ENCODE measurements at regions of chr14 and their contacts with region 1.

Region 1: GRCh38 chr14:73741386-73741875 is 27.2 kb upstream of the PNMA1 start:
- DNase-seq: peak; percentile 97
- H3K4me3 ChIP-seq: peak overlapping the region in 1 of 3 experiments; percentile 31
- H3K27ac ChIP-seq: peak overlapping the region; percentile 96
- H3K4me1 ChIP-seq: peaks cover 66% of the 10 kb centered on the region
- H3K27me3 ChIP-seq: no peaks in the 10 kb centered on the region
- CTCF ChIP-seq: no peak
- POLR2A ChIP-seq: no peak

Region 2: DNA sequence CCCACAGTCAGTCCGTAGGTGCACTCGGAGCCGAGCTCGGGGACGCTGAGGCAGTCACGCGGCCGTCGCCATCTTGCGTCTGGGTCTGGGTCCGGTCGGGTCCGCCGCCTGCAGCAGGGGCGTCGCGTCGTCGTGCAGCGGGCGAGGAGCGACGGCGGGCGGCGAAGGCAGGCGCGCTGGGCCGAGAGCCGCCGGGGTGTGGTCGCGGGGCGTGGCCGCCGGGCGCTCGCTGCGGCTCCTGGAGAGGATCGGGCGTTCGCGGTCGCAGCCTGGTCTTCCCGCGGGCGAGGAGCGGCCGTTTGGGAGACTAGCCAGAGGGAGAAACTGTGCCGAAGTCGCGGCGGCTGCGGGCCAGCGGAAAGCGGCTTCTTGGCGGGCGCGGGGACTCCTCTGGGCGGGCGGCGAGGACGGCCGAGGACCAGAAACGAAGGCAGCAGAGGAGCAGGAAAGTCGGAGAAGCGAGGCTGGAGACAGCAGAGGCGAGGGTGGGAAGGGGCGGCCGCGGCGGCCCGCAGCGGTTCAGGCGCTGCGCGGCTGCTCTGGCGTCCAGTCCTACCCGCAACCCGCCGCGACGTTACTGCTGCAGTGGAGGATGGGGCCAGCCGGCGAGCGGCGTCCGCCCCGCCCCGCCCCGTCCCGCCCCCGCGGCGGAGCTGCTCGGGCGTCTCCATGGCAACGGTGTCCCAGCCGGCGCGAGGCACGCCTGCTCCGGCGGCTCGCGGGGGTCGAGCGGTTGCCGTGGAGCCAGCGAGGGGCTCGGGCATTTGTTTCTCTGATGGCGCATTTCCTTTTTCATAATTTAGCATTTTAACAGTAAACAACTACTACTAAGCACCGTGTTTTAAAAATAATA is 27.4 kb before region 1 on chr14 and contains the start of gene PNMA1:
- CTCF ChIA-PET with region 1: no interaction called
- POLR2A ChIA-PET with region 1: no interaction called
- dilution Hi-C with region 1: no loop called
- intact Hi-C with region 1: loop called (anchors 2 kb)
- DNase-seq: peak; percentile 89
- H3K4me3 ChIP-seq: peak within 1 kb of the TSS; percentile 15 to 81 (median 74)
- H3K27ac ChIP-seq: peak within 1 kb of the TSS; percentile 73
- H3K4me1 ChIP-seq: peaks cover 15% of the 10 kb centered on the region
- H3K27me3 ChIP-seq: no peaks in the 10 kb centered on the region
- CTCF ChIP-seq: no peak
- POLR2A ChIP-seq: peak; percentile 91
- total RNA-seq, gene PNMA1: 82.4 and 82.6 TPM in 2 replicates

Region 3: GRCh38 chr14:73753959-73754882 is 12.8 kb after region 1 on chr14:
- CTCF ChIA-PET with region 1: interaction called, 91 read pairs
- POLR2A ChIA-PET with region 1: interaction called, 31 read pairs
- dilution Hi-C with region 1: no loop called
- intact Hi-C with region 1: loop called (anchors 1 kb)
- DNase-seq: peak; percentile 57
- H3K4me3 ChIP-seq: peak overlapping the region in 1 of 3 experiments; percentile 39
- H3K27ac ChIP-seq: peak overlapping the region; percentile 96
- H3K4me1 ChIP-seq: peaks cover 81% of the 10 kb centered on the region
- H3K27me3 ChIP-seq: no peaks in the 10 kb centered on the region
- CTCF ChIP-seq: no peak
- POLR2A ChIP-seq: no peak

Region 4: DNA sequence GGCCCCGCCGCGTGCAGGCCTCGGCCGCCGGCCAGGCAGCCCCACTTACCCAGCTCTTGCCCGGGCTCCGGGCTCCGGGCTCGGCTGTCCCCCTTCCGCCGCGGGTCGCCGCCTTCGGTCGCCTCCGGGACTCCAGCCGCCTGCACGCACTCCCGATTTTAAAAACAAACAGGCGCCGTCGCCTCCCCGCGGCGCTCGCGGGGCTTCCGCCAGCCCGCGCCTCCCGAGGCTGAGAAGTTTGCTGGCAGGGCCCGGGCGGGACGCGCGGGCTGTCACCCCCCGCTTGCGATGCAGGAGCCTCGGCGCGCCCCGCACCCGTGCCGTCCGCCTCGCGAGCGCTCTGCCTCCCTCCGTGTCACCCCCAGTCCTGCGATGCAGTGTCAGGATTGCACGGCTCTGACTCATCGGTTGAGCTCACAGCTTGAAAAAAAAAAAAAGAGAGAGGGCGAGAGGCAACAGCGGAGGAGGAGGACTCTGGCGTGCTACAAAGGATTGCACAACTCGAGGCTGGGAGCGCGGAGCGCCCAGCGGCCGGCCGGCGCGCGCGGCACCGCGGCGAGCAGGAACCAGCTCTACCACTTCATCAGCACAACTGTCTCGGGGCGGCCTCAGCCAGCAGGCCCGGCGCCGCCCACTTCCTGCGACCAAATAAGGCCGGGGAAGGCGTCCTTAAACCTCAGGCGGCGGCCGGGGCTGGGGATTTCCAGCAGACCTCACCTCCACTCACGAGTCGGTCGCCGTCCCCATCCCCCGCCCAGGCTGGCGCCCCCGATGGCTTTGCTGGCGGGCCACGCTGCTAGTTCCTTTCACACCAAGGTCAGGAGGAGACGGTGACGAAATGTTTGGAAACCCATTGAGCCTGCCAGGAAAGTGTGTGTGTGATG is 18.5 kb after region 1 on chr14:
- CTCF ChIA-PET with region 1: interaction called, 91 read pairs
- POLR2A ChIA-PET with region 1: interaction called, 31 read pairs
- dilution Hi-C with region 1: no loop called
- intact Hi-C with region 1: loop called (anchors 1 kb)
- DNase-seq: peak; percentile 97
- H3K4me3 ChIP-seq: peak overlapping the region; percentile 53 to 60 (median 54)
- H3K27ac ChIP-seq: peak overlapping the region; percentile 96
- H3K4me1 ChIP-seq: peaks cover 53% of the 10 kb centered on the region
- H3K27me3 ChIP-seq: no peaks in the 10 kb centered on the region
- CTCF ChIP-seq: peak in 1 of 2 donors; percentile 11
- POLR2A ChIP-seq: peak; percentile 98

Region 5: DNA sequence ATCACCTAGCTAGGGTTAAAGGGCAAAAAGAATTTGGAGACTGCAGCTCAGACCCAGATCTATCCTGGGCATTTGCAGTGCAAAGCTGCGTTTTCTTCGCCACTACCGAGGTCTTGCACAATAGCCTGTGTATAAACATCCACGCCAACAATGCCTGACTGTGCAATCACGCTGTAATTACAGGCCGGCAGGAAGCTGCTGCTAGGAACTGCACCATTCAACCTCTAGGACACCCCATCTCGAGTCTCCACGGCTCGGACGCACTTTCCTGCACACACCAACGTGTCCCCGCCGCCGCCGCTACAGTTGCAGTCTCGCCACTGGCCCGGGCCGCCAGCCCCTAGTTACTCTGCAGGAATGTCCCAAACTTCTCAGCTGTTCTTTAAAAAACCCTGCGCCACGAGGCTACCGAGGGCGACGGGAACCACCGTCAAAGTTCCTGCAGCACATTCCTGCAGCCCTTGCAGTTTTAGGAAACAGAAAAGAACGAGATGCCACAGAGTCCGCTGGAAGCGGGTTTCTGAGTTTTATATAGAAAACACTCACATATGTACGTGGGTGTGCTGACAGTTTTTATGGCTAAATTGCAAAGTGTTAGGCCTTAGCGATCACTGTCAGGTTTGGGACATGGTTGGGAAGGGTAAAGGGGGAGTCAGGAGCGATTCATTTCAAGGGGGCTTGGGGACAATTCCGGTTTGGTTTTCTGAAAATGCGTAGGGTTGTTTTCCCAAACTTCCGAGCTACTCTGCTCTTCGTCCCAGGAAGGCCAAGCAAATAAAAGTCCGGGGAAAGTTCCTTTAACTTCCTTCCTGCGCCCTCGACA is 44.7 kb after region 1 on chr14:
- CTCF ChIA-PET with region 1: interaction called, 5 read pairs
- POLR2A ChIA-PET with region 1: no interaction called
- dilution Hi-C with region 1: no loop called
- intact Hi-C with region 1: loop called (anchors 1 kb)
- DNase-seq: peak; percentile 84
- H3K4me3 ChIP-seq: peak overlapping the region; percentile 33 to 79 (median 47)
- H3K27ac ChIP-seq: peak overlapping the region; percentile 93
- H3K4me1 ChIP-seq: peaks cover 52% of the 10 kb centered on the region
- H3K27me3 ChIP-seq: no peaks in the 10 kb centered on the region
- CTCF ChIP-seq: peak in 1 of 2 donors; percentile 35
- POLR2A ChIP-seq: no peak

Region 6: GRCh38 chr14:73825551-73826188 is 84.2 kb after region 1 on chr14:
- CTCF ChIA-PET with region 1: interaction called, 20 read pairs
- POLR2A ChIA-PET with region 1: no interaction called
- dilution Hi-C with region 1: no loop called
- intact Hi-C with region 1: loop called (anchors 1 kb)
- DNase-seq: peak; percentile 71
- H3K4me3 ChIP-seq: no peak overlapping the region
- H3K27ac ChIP-seq: no peak overlapping the region
- H3K4me1 ChIP-seq: peaks cover 7% of the 10 kb centered on the region
- H3K27me3 ChIP-seq: no peaks in the 10 kb centered on the region
- CTCF ChIP-seq: peak; percentile 89
- POLR2A ChIP-seq: no peak

Region 7: GRCh38 chr14:73851644-73852382 is 110.4 kb after region 1 on chr14 and contains the start of gene PTGR2:
- CTCF ChIA-PET with region 1: interaction called, 3 read pairs
- POLR2A ChIA-PET with region 1: no interaction called
- dilution Hi-C with region 1: no loop called
- intact Hi-C with region 1: loop called (anchors 5 kb)
- DNase-seq: peak; percentile 97
- H3K4me3 ChIP-seq: peak within 1 kb of the TSS; percentile 48 to 79 (median 52)
- H3K27ac ChIP-seq: peak within 1 kb of the TSS; percentile 93
- H3K4me1 ChIP-seq: peaks cover 17% of the 10 kb centered on the region
- H3K27me3 ChIP-seq: no peaks in the 10 kb centered on the region
- CTCF ChIP-seq: no peak
- POLR2A ChIP-seq: peak; percentile 64
- total RNA-seq, gene PTGR2: 3.6 and 5.6 TPM in 2 replicates

Measured in endothelial cell of umbilical vein (primary cell).